HEK293 (cell line): ENCODE measurements at regions of chr11 and their contacts with region 1.

Region 1: GRCh38 chr11:85647604-85648299 is at the start of gene TMEM126A:
- H3K4me3 ChIP-seq: peak within 1 kb of the TSS; percentile 51
- H3K27ac ChIP-seq: peak within 1 kb of the TSS; percentile 60
- H3K4me1 ChIP-seq: no peaks in the 10 kb centered on the region
- CTCF ChIP-seq: no peak

Region 2: DNA sequence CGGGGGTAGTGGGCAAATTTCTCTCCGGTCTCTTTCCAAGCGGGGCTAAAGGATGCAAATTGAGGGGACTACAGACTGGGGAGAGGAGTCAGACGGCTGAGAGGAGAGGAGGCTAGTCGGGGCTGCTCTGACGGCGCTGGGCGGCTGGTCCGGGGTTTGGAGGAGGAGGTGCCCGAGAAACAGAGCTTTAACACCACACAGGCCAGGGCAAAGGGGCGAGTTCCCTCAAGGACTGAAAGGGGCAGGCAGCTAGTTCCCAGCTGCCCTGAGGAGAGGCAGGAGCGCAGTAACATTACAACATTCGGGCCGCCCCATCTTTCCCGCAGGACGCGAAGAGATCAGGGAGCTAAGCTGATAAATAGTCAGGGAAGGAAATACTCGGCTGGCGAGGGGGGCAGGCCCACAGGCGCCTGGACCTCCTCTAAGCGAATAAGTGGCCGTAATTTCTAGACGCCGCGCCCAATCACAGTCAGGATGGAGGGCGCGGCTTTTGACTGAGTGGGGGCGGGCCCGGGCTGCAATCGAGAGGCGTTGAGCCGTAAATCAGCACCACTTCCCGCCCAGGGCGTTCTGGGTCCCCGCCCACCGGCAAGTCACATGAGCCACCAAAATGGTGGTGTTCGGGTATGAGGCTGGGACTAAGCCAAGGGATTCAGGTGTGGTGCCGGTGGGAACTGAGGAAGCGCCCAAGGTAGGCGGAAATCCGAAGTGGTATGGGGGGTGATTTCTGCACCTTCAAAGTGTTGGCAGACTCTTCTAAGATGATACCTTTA is 19.6 kb before region 1 on chr11 and contains the start of gene TMEM126B:
- CTCF ChIA-PET with region 1: no interaction called
- POLR2A ChIA-PET with region 1: interaction called, 48 read pairs
- H3K4me3 ChIP-seq: peak within 1 kb of the TSS; percentile 79
- H3K27ac ChIP-seq: peak within 1 kb of the TSS; percentile 55
- H3K4me1 ChIP-seq: no peaks in the 10 kb centered on the region; the same call in 1 of the 2 replicates
- CTCF ChIP-seq: no peak

Region 3: GRCh38 chr11:85634747-85635146 is 13.0 kb before region 1 on chr11:
- CTCF ChIA-PET with region 1: interaction called, 13 read pairs
- POLR2A ChIA-PET with region 1: interaction called, 24 read pairs
- H3K4me3 ChIP-seq: no peak overlapping the region
- H3K27ac ChIP-seq: no peak overlapping the region
- H3K4me1 ChIP-seq: no peaks in the 10 kb centered on the region
- CTCF ChIP-seq: no peak

Region 4: DNA sequence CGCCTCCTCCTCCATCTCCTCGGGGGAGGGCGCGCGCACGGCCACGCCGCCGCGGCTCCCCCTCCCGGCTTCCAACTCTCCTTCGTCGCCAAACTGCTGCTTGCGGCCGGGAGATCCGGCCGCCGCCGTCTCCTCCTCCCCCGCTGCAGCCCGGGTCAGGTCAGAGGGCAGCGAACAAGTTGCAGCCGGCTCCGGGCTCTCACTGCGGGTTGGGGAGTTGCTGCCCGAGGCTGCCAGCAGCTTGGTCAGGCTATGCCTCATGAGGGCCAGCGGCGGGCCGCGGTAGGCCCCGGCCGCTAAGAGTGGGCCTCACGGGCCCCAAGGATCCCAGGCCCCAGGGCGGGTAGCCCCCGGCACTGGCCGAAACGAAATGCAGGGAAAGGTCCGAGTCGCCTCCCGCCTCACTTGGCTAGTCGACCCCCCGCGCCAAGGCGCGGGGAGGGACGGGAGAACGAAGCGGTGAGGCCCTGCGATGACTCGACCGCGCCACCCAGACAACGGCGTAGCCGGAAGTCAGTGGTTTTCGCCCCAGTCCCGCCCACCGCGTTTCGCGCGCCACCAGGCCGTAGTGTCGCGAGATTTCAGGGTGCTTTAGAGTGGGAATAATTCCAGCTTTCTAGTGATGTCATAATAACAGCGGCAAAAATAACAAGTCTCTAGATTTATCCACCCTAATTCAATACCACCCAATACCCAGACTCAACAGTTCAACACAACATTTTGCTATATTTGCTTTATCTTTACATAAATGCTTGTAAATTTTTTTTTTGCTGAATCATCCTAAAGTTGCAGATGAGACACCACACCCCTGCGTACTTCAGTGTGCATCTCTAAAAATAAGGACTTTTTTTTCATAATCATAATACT is 17.1 kb after region 1 on chr11 and contains the start of gene CREBZF:
- CTCF ChIA-PET with region 1: no interaction called
- POLR2A ChIA-PET with region 1: interaction called, 37 read pairs
- H3K4me3 ChIP-seq: peak within 1 kb of the TSS; percentile 91
- H3K27ac ChIP-seq: peak within 1 kb of the TSS; percentile 94
- H3K4me1 ChIP-seq: no peaks in the 10 kb centered on the region
- CTCF ChIP-seq: no peak